Natural killer cell (primary cell): ENCODE measurements at regions of chr6 and their contacts with region 1.

Region 1: GRCh38 chr6:158220786-158221442 is 52.8 kb downstream of the GTF2H5 start:
- DNase-seq: peak; percentile 72 to 87
- ATAC-seq: peak; percentile 89 to 99 (median 99)
- H3K4me3 ChIP-seq: no peak overlapping the region
- H3K4me3 Mint-ChIP-seq: no peak overlapping the region
- H3K27ac ChIP-seq: no peak overlapping the region
- H3K27ac Mint-ChIP-seq: no peak overlapping the region
- H3K4me1 ChIP-seq: no peaks in the 10 kb centered on the region
- H3K4me1 Mint-ChIP-seq: no peaks in the 10 kb centered on the region
- H3K27me3 ChIP-seq: no peaks in the 10 kb centered on the region
- H3K27me3 Mint-ChIP-seq: no peaks in the 10 kb centered on the region
- CTCF ChIP-seq: peak; percentile 96

Region 2: DNA sequence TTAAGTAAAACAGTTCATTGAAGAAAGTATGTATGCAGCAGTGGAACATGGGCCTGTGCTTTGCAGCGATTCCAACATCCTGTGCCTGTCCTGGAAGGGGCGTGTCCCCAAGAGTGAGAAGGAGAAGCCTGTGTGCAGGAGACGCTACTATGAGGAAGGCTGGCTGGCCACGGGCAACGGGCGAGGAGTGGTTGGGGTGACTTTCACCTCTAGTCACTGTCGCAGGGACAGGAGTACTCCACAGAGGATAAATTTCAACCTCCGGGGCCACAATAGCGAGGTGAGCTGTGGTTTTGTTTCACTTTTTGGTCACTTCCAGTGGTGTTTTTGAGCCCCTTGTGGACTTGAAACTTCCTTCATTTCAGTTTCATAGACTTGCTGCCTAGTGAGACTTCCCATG is 93.1 kb after region 1 on chr6:
- intact Hi-C with region 1: no loop called
- DNase-seq: no peak
- ATAC-seq: peak in 1 of 3 donors; percentile 54
- H3K4me3 ChIP-seq: no peak overlapping the region
- H3K4me3 Mint-ChIP-seq: peak overlapping the region; percentile 19
- H3K27ac ChIP-seq: no peak overlapping the region
- H3K27ac Mint-ChIP-seq: no peak overlapping the region
- H3K4me1 ChIP-seq: peaks cover 5% of the 10 kb centered on the region
- H3K4me1 Mint-ChIP-seq: peaks cover 12 to 16% of the 10 kb centered on the region in 2 donors
- H3K27me3 ChIP-seq: no peaks in the 10 kb centered on the region
- H3K27me3 Mint-ChIP-seq: no peaks in the 10 kb centered on the region
- CTCF ChIP-seq: no peak

Region 3: GRCh38 chr6:158387036-158387435 is 166.1 kb after region 1 on chr6:
- intact Hi-C with region 1: loop called (anchors 1 kb)
- DNase-seq: peak in 1 of 2 donors; percentile 53
- ATAC-seq: peak in 1 of 3 donors; percentile 38
- H3K4me3 ChIP-seq: no peak overlapping the region
- H3K4me3 Mint-ChIP-seq: no peak overlapping the region
- H3K27ac ChIP-seq: no peak overlapping the region
- H3K27ac Mint-ChIP-seq: peak overlapping the region in 1 of 2 donors; percentile 29
- H3K4me1 ChIP-seq: no peaks in the 10 kb centered on the region
- H3K4me1 Mint-ChIP-seq: peaks cover 22 to 29% of the 10 kb centered on the region in 2 donors
- H3K27me3 ChIP-seq: no peaks in the 10 kb centered on the region
- H3K27me3 Mint-ChIP-seq: no peaks in the 10 kb centered on the region
- CTCF ChIP-seq: peak; percentile 12

Region 4: DNA sequence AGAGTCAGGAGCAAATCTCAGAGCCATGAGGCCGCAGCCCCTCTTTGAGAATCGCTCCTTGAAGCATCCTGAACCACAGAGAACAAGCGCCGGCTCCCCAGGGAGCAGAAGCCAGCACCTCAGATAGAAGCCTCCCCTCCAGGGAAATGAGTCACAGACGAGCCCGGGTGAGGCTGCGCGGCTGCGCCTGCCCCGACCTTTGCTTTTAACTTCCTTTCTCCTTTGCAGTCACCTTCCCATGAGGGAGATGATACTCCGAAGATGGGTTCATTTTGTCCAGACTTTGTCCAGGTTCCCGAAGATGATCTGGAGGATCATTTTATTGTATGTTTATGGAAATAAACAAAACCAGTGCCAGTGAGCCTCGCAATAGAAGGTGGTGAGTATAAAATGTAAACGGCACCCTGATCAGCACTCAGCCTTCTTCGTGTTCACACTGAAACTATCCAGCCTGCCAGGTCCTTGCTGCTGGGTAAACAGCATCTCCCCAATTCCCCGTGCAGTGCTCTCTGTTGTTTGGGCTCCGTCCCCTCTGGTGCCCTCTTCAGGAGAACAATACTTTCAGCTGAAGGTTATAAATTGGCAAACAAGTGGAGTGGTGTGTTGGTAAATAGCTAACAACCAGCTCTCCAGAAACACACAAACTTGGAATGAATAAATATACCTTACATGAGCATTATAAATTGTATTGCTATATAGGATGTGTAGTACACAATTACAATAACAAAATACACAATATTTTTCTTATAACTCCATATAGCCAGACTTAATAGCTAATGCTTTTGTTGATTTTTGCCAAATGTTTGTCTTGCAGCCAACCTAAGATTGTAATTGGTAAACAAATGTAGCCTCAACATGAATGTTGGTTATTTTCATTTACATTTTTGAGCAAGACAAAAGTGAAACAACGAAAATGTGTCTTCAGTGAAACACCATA is 297.5 kb after region 1 on chr6:
- intact Hi-C with region 1: loop called (anchors 2 kb)
- DNase-seq: peak in 1 of 2 donors; percentile 76
- ATAC-seq: peak; percentile 60 to 76 (median 76)
- H3K4me3 ChIP-seq: peak overlapping the region; percentile 22
- H3K4me3 Mint-ChIP-seq: peak overlapping the region; percentile 80
- H3K27ac ChIP-seq: peak overlapping the region; percentile 6
- H3K27ac Mint-ChIP-seq: peak overlapping the region in 1 of 2 donors; percentile 74
- H3K4me1 ChIP-seq: peaks cover 38% of the 10 kb centered on the region
- H3K4me1 Mint-ChIP-seq: peaks cover 43 to 44% of the 10 kb centered on the region in 2 donors
- H3K27me3 ChIP-seq: peaks cover 2% of the 10 kb centered on the region
- H3K27me3 Mint-ChIP-seq: peaks cover 21 to 39% of the 10 kb centered on the region in 2 donors
- CTCF ChIP-seq: peak; percentile 24